ENCODE measurements at regions of chr2 and their contacts with region 1.

Region 1: DNA sequence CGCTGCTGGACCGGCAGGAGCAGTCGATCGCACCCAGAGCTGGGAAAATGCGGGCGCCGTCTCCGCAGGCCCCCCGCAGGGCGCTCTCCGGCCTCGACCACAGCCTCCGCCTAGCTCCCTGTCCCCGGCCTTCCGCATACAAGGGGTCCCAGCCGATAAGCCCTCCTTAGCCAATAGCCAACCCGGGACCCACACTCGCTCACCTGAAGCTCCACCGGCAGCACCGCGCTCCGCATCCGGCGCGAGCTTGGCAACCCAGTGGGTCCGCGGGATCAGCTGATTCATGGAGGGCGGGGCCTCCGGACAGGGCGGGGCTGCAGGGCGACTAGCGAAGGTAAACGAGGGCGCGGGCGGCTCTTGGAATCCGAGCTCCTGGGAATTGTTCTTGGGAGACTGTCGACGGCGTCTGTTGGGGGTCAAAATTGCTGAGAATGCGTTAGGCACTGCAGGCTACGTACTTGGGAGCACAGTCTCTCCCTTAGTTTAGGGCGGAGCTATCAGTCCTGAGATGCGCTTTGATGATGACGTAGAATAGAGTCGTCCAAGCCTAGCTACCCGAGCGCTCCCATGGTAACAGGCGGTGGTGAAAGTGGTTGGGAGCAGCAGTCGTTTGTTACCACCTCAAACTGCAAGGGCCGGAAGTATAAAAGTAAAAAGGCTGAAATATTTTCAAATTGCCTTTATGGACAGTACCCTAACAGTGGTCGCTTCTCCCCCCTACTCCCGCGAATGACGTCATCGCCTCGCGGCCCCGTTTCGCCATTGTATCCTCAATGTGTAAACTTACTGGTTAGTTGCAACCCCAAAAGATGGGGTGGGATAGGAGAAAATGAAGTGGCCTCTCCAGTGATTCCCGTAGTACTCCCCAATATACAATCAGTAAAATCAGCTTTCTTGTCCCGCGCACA is at the start of gene ALS2:
- DNase-seq: peak; percentile 98
- H3K4me3 Mint-ChIP-seq: peak within 1 kb of the TSS; percentile 95
- H3K27ac Mint-ChIP-seq: peak within 1 kb of the TSS; percentile 97
- H3K4me1 Mint-ChIP-seq: peaks cover 13% of the 10 kb centered on the region
- H3K27me3 Mint-ChIP-seq: no peaks in the 10 kb centered on the region
- CTCF ChIP-seq: no peak
- total RNA-seq, gene ALS2: 14.6 and 20.7 TPM in 2 replicates

Region 2: GRCh38 chr2:201642579-201643215 is 138.2 kb before region 1 on chr2:
- CTCF ChIA-PET with region 1: no interaction called
- POLR2A ChIA-PET with region 1: interaction called, 15 read pairs
- intact Hi-C with region 1: no loop called
- DNase-seq: peak; percentile 85
- H3K4me3 Mint-ChIP-seq: peak overlapping the region; percentile 90
- H3K27ac Mint-ChIP-seq: peak overlapping the region; percentile 96
- H3K4me1 Mint-ChIP-seq: peaks cover 19% of the 10 kb centered on the region
- H3K27me3 Mint-ChIP-seq: no peaks in the 10 kb centered on the region
- CTCF ChIP-seq: no peak

Region 3: DNA sequence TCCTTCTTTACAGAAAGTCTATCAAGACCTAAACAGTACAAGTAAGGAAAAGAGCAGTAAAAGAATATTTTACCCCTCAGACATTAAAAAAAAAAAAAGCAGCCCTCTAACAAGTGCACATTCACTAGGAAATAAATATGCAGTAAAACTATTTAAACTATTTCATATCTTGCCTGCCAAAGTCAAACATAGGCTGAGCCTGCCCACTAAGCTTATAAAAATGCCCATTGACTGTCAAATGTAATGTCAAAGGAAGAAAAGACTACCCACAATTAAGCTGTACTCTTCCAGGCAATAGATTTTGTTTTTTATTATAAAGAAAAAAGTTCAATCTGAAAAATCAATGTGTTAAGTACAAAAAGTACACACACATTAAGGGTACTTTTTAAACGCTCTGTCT is 12.0 kb before region 1 on chr2:
- CTCF ChIA-PET with region 1: interaction called, 3 read pairs
- POLR2A ChIA-PET with region 1: interaction called, 16 read pairs
- intact Hi-C with region 1: no loop called
- DNase-seq: no peak
- H3K4me3 Mint-ChIP-seq: no peak overlapping the region
- H3K27ac Mint-ChIP-seq: no peak overlapping the region
- H3K4me1 Mint-ChIP-seq: peaks cover under 1% of the 10 kb centered on the region
- H3K27me3 Mint-ChIP-seq: no peaks in the 10 kb centered on the region
- CTCF ChIP-seq: no peak

Region 4: DNA sequence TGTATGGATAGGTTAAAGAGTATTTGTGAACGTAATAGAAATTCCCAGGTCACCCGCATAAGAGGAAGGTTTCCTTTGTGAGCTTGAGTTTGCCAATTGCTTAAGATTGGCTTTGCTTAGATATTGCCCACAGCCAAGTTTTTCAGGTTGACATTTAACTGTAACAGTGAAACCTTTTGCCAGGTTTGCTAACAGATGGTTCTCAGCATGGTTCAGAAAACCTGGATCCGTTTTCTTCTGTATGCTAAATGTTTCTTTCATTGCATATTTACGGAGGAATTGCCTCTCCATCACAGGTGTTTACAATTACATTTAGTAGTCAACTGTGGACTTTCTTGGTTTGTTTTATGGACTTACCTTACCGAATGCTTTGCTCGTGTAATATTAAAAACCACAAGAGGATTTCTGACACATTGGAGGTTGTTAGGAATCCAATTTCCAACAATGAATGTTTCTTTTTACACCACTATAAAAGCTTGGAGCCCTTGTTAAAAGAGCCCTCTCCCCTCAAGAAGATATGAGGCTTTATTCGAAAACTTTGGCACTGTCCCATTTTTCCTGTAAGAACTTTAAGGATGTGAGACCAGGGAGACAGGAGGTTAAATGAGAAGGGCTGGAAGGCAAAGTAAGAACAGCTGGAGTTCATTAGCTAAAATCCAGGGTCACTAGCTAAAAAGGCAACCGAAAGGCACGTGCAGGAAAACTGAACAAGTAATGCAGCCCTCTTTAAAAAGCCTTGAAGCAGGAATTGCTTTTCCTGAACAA is 33.2 kb after region 1 on chr2:
- CTCF ChIA-PET with region 1: no interaction called
- POLR2A ChIA-PET with region 1: no interaction called
- intact Hi-C with region 1: no loop called
- DNase-seq: no peak
- H3K4me3 Mint-ChIP-seq: no peak overlapping the region
- H3K27ac Mint-ChIP-seq: no peak overlapping the region
- H3K4me1 Mint-ChIP-seq: no peaks in the 10 kb centered on the region
- H3K27me3 Mint-ChIP-seq: no peaks in the 10 kb centered on the region
- CTCF ChIP-seq: no peak

Region 5: GRCh38 chr2:202158796-202159195 is 377.9 kb after region 1 on chr2:
- CTCF ChIA-PET with region 1: no interaction called
- POLR2A ChIA-PET with region 1: interaction called, 3 read pairs
- intact Hi-C with region 1: loop called (anchors 5 kb)
- DNase-seq: peak; percentile 26
- H3K4me3 Mint-ChIP-seq: no peak overlapping the region
- H3K27ac Mint-ChIP-seq: no peak overlapping the region
- H3K4me1 Mint-ChIP-seq: no peaks in the 10 kb centered on the region
- H3K27me3 Mint-ChIP-seq: peaks cover 10% of the 10 kb centered on the region
- CTCF ChIP-seq: no peak